CD8-positive, alpha-beta T cell (primary cell): ENCODE measurements at regions of chr11 and their contacts with region 1.

Region 1: DNA sequence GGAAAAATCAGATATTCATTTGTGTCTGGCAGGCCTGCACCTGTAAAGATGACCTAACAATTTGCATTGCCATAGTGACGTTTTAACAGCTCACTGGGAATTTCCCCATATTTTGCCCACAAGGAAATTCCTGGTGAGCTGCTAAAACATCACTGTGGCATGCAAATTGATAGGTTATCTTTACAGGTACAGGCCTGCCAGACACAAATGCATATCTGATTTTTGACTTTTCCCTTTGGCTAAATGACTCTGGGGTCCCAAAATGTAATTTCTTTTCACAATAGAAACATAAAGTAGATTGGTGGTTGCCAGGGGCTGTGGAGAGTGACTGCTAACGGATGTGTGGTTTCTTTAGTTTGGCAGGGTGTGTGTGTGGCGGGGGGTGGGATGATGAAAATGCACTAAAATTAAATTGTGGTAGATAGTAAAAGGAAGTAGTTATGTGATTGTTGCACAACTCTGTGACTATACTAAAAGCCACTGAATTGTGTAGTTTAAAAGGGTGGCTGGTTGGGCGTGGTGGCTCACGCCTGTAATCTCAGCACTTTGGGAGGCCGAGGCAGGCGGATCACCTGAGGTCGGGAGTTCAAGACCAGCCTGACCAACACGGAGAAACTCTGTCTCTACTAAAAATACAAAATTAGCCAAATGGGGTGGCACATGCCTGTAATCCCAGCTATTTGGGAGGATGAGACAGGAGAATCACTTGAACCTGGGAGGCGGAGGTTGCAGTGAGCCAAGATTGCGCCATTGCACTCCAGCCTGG is 18.5 kb upstream of the FEZ1 start:
- DNase-seq: peak; percentile 27 to 95 (median 53)
- ATAC-seq: peak; percentile 84
- H3K4me3 ChIP-seq: no peak overlapping the region
- H3K4me3 Mint-ChIP-seq: peak overlapping the region; percentile 30
- H3K27ac ChIP-seq: peak overlapping the region; percentile 52 to 88
- H3K27ac Mint-ChIP-seq: peak overlapping the region; percentile 89
- H3K4me1 ChIP-seq: peaks cover 35% of the 10 kb centered on the region
- H3K4me1 Mint-ChIP-seq: peaks cover 37% of the 10 kb centered on the region
- H3K27me3 ChIP-seq: no peaks in the 10 kb centered on the region
- H3K27me3 Mint-ChIP-seq: no peaks in the 10 kb centered on the region
- CTCF ChIP-seq: no peak

Region 2: GRCh38 chr11:125494974-125495725 is 19.4 kb before region 1 on chr11:
- CTCF ChIA-PET with region 1: no interaction called
- POLR2A ChIA-PET with region 1: no interaction called
- intact Hi-C with region 1: loop called in 1 of 2 experiments (anchors 2 kb)
- DNase-seq: peak in 4 of 9 experiments; percentile 15 to 51 (median 39)
- ATAC-seq: peak; percentile 27
- H3K4me3 ChIP-seq: peak overlapping the region; percentile 65 to 68
- H3K4me3 Mint-ChIP-seq: peak overlapping the region; percentile 89
- H3K27ac ChIP-seq: no peak overlapping the region
- H3K27ac Mint-ChIP-seq: no peak overlapping the region
- H3K4me1 ChIP-seq: peaks cover 15% of the 10 kb centered on the region
- H3K4me1 Mint-ChIP-seq: peaks cover 24% of the 10 kb centered on the region
- H3K27me3 ChIP-seq: peaks cover 9 to 15% of the 10 kb centered on the region in 2 experiments
- H3K27me3 Mint-ChIP-seq: peaks cover 44% of the 10 kb centered on the region
- CTCF ChIP-seq: no peak

Region 3: DNA sequence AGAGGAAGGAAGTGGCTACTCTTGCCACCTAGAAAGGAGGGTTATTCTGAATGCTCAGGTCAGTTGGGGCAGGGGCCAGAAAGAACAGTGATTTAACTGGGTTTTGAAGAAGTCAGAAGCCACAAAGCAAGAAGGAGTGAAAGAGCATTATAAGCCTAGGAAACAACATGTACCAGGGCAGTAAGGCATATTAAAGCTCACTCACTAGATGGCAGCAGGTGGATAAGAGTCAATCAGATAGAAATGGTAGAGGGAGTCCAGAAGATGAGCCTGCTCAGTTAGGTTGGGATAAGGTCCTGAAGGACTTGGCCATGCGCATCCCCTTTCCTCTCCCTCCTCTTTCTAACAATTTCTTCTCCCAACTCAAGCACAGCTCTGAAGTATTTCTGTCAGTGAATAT is 209.6 kb after region 1 on chr11:
- CTCF ChIA-PET with region 1: no interaction called
- POLR2A ChIA-PET with region 1: no interaction called
- intact Hi-C with region 1: no loop called
- DNase-seq: peak in 1 of 9 experiments; percentile 5
- ATAC-seq: no peak
- H3K4me3 ChIP-seq: no peak overlapping the region
- H3K4me3 Mint-ChIP-seq: no peak overlapping the region
- H3K27ac ChIP-seq: no peak overlapping the region
- H3K27ac Mint-ChIP-seq: no peak overlapping the region
- H3K4me1 ChIP-seq: no peaks in the 10 kb centered on the region
- H3K4me1 Mint-ChIP-seq: no peaks in the 10 kb centered on the region
- H3K27me3 ChIP-seq: peaks cover 0 to 1% of the 10 kb centered on the region in 2 experiments
- H3K27me3 Mint-ChIP-seq: peaks cover 37% of the 10 kb centered on the region
- CTCF ChIP-seq: no peak

Region 4: DNA sequence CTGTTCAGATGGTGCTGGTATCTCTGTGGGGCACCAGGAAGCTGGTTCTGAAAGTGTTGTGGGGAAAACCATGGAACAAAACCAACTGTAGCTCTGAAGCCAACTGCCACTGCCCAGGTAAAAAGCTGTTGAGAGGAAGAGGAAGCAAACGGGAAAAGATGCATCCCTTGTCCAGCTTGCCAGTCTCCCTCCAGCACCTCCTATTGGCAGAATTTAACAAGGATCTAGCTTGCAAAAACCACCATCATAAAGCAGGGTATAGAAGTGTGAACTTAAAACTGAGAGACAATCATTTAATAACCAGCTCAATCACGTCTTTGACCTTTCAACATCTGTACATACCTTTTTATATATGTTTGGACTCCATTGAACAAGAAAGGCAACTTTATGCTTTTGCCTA is 236.1 kb after region 1 on chr11:
- CTCF ChIA-PET with region 1: no interaction called
- POLR2A ChIA-PET with region 1: no interaction called
- intact Hi-C with region 1: no loop called
- DNase-seq: no peak
- ATAC-seq: no peak
- H3K4me3 ChIP-seq: no peak overlapping the region
- H3K4me3 Mint-ChIP-seq: no peak overlapping the region
- H3K27ac ChIP-seq: no peak overlapping the region
- H3K27ac Mint-ChIP-seq: no peak overlapping the region
- H3K4me1 ChIP-seq: no peaks in the 10 kb centered on the region
- H3K4me1 Mint-ChIP-seq: no peaks in the 10 kb centered on the region
- H3K27me3 ChIP-seq: peaks cover 0 to 2% of the 10 kb centered on the region in 2 experiments
- H3K27me3 Mint-ChIP-seq: peaks cover 12% of the 10 kb centered on the region
- CTCF ChIP-seq: no peak

Region 5: DNA sequence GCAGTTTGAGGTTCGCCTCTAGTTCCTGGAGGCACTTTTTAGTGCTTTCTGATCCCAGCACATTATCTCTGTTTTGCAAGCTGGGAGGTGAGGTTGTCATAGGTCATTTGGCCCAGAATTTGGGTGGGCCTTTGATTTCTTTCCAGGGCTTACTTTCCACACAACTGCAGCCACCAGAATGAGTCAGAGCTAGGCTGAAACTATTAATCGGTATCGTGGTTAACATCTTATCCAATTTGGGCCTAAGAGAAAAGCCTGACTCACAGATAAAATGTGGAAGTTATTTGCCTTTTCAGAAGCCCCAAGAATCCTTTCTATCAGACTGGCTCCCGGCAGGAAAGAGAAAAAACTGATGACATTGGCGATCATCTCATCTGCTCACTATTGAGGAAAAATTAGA is 1319.6 kb after region 1 on chr11:
- CTCF ChIA-PET with region 1: no interaction called
- POLR2A ChIA-PET with region 1: no interaction called
- intact Hi-C with region 1: no loop called
- DNase-seq: no peak
- ATAC-seq: no peak
- H3K4me3 ChIP-seq: no peak overlapping the region
- H3K4me3 Mint-ChIP-seq: no peak overlapping the region
- H3K27ac ChIP-seq: no peak overlapping the region
- H3K27ac Mint-ChIP-seq: no peak overlapping the region
- H3K4me1 ChIP-seq: no peaks in the 10 kb centered on the region
- H3K4me1 Mint-ChIP-seq: no peaks in the 10 kb centered on the region
- H3K27me3 ChIP-seq: peaks cover 0 to 2% of the 10 kb centered on the region in 2 experiments
- H3K27me3 Mint-ChIP-seq: peaks cover 4% of the 10 kb centered on the region
- CTCF ChIP-seq: no peak